ENCODE measurements at regions of chr4 and their contacts with region 1.

Region 1: GRCh38 chr4:34771632-34772031 is 1472.7 kb downstream of the ARAP2 start:
- ATAC-seq: no peak
- H3K4me3 ChIP-seq: no peak overlapping the region
- H3K27ac ChIP-seq: no peak overlapping the region
- H3K4me1 ChIP-seq: no peaks in the 10 kb centered on the region

Region 2: GRCh38 chr4:34826660-34827059 is 55.0 kb after region 1 on chr4:
- in situ Hi-C with region 1: loop called in 2 of 9 experiments (anchors 10 kb)
- ATAC-seq: no peak
- H3K4me3 ChIP-seq: no peak overlapping the region
- H3K27ac ChIP-seq: no peak overlapping the region
- H3K4me1 ChIP-seq: no peaks in the 10 kb centered on the region

Measured in motor neuron (in vitro differentiated cells).